H1 (cell line): ENCODE measurements at regions of chr9 and their contacts with region 1.

Region 1: GRCh38 chr9:124126571-124127289 is 115.2 kb downstream of the LHX2 start:
- DNase-seq: peak; percentile 78 to 96
- H3K4me3 ChIP-seq: no peak overlapping the region
- H3K27ac ChIP-seq: no peak overlapping the region
- H3K4me1 ChIP-seq: peaks cover 0 to 12% (median 7%) of the 10 kb centered on the region in 4 experiments; a peak in 6 of 7 replicates
- H3K27me3 ChIP-seq: no peaks in the 10 kb centered on the region; a peak in 2 of 7 replicates
- CTCF ChIP-seq: peak; percentile 92 to 96 (median 96)
- EP300 ChIP-seq: no peak
- POLR2A ChIP-seq: no peak
- RAD21 ChIP-seq: peak; percentile 92 to 96

Region 2: DNA sequence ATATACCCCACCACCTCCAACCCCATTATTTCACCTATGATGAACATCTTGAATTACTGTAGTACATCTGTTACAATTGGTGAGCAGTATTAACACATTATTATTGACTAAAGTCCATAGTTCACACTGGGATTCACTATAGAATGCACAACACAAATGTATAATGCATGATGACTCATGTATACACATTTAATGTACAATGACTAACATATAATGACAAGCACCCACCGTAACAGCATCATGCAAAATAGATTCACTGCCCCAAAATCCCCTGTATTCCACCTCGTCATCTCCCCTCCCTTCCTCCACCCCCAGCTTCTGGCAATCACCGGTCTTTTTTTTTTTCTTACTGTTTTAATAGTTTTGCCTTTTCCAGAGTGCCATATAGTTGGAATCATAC is 84.0 kb after region 1 on chr9:
- CTCF ChIA-PET with region 1: interaction called, 17 read pairs
- POLR2A ChIA-PET with region 1: no interaction called
- DNase-seq: no peak
- H3K4me3 ChIP-seq: no peak overlapping the region
- H3K27ac ChIP-seq: no peak overlapping the region
- H3K4me1 ChIP-seq: peaks cover 0 to 4% (median 2%) of the 10 kb centered on the region in 4 experiments; a peak in 4 of 7 replicates
- H3K27me3 ChIP-seq: no peaks in the 10 kb centered on the region
- CTCF ChIP-seq: no peak
- EP300 ChIP-seq: no peak
- POLR2A ChIP-seq: no peak
- RAD21 ChIP-seq: no peak

Region 3: DNA sequence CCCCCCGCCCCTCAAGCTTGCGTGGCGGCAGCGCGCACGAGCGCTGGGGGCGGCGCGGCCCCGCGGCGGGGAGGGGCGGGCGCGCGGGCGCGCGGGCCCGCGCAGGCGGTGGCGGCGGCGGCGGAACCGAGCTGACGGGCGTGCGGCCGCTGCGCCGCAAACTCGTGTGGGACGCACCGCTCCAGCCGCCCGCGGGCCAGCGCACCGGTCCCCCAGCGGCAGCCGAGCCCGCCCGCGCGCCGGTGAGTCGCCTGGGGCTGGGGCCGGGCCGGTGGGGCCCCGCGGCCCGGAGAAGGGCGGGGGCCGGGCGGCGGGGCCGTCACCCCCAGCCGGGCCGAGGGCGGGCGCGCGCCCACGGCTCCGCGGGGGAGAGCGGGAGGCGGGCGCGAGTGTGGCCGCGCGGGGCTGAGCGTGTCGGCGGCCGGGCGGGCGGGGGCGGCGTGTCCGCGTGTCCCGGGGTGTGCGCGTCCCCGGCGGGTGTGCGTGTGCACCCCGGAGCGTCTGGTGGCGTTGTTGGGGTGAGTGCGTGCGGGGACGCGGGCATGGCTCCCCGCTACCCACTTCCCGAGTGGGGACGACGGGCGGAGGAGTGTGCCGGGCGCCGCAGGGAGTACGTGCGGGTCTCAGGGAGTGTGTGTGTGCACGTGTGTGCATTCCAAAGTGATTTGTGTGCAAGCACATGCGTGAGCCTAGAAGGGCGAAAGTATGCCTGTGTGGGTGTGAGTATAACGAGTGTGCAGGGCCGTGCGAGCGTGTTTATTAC is 131.3 kb after region 1 on chr9 and contains the start of gene NEK6:
- CTCF ChIA-PET with region 1: interaction called, 14 read pairs
- POLR2A ChIA-PET with region 1: no interaction called
- DNase-seq: no peak
- H3K4me3 ChIP-seq: peak within 1 kb of the TSS; percentile 66 to 77 (median 71)
- H3K27ac ChIP-seq: no peak within 1 kb of the TSS
- H3K4me1 ChIP-seq: peaks cover 8 to 21% (median 12%) of the 10 kb centered on the region in 4 experiments; a peak in 6 of 7 replicates
- H3K27me3 ChIP-seq: no peaks in the 10 kb centered on the region; a peak in 2 of 7 replicates
- CTCF ChIP-seq: no peak
- EP300 ChIP-seq: no peak
- POLR2A ChIP-seq: no peak
- RAD21 ChIP-seq: no peak
- total RNA-seq, gene NEK6: 16.6 and 19.7 TPM in 2 replicates

Region 4: GRCh38 chr9:124312290-124313265 is 185.8 kb after region 1 on chr9:
- CTCF ChIA-PET with region 1: interaction called, 31 read pairs
- POLR2A ChIA-PET with region 1: no interaction called
- DNase-seq: no peak
- H3K4me3 ChIP-seq: no peak overlapping the region
- H3K27ac ChIP-seq: no peak overlapping the region
- H3K4me1 ChIP-seq: peaks cover 0 to 9% (median 3%) of the 10 kb centered on the region in 4 experiments; a peak in 3 of 7 replicates
- H3K27me3 ChIP-seq: no peaks in the 10 kb centered on the region
- CTCF ChIP-seq: peak; percentile 67 to 82 (median 67)
- EP300 ChIP-seq: no peak
- POLR2A ChIP-seq: no peak
- RAD21 ChIP-seq: peak; percentile 42 to 64